PC-9 (cell line): ENCODE measurements at regions of chr3 and their contacts with region 1.

Region 1: GRCh38 chr3:4852780-4853748 is 126.2 kb upstream of the BHLHE40 start:
- DNase-seq: peak; percentile 26 to 72
- H3K4me3 ChIP-seq: no peak overlapping the region
- H3K27ac ChIP-seq: peak overlapping the region; percentile 52
- H3K4me1 ChIP-seq: peaks cover 14% of the 10 kb centered on the region
- H3K27me3 ChIP-seq: no peaks in the 10 kb centered on the region
- CTCF ChIP-seq: no peak

Region 2: GRCh38 chr3:4831580-4831950 is 21.5 kb before region 1 on chr3:
- CTCF ChIA-PET with region 1: no interaction called
- POLR2A ChIA-PET with region 1: no interaction called
- intact Hi-C with region 1: loop called (anchors 2 kb)
- DNase-seq: no peak
- H3K4me3 ChIP-seq: peak overlapping the region; percentile 47; the same call in 1 of the 2 replicates
- H3K27ac ChIP-seq: peak overlapping the region; percentile 96
- H3K4me1 ChIP-seq: peaks cover 57% of the 10 kb centered on the region
- H3K27me3 ChIP-seq: no peaks in the 10 kb centered on the region
- CTCF ChIP-seq: no peak